AG04449 (cell line): ENCODE measurements at regions of chr3 and their contacts with region 1.

Region 1: GRCh38 chr3:47849699-47850563 is 47.0 kb downstream of the DHX30 start:
- DNase-seq: no peak
- H3K4me3 ChIP-seq: no peak overlapping the region
- CTCF ChIP-seq: peak; percentile 39

Region 2: GRCh38 chr3:47836986-47837385 is 12.9 kb before region 1 on chr3:
- CTCF ChIA-PET with region 1: interaction called, 11 read pairs
- POLR2A ChIA-PET with region 1: interaction called, 3 read pairs
- DNase-seq: no peak
- H3K4me3 ChIP-seq: no peak overlapping the region
- CTCF ChIP-seq: no peak

Region 3: DNA sequence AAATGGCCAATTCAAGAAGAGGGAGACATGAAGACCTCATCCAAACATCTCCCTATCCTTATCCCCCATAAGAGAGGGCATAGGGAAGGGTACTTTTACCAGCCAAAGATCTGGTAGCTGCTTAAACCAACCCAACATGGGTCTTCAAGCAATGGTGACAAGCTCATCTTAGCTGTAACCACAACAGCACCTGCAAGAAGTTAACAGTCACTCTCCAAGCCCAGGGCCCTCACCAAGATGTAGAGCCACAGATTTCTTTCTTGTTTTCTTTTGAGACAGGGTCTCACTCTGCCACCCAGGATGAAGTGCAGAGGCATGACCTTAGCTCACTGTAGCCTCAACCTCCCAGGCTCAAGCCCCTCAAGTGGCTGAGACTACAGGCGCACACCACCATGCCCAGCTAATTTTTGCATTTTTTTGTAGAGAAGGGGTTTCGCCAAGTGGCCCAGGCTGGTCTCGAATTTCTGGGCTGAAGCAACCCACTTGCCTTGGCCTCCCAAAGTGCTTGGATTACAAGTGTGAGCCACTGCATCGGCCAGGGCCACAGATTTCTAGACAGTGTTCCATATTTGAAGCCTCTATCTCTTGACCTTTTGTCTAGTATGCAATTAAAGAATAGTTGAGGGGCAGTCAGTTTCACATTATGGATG is 10.2 kb after region 1 on chr3:
- CTCF ChIA-PET with region 1: interaction called, 13 read pairs
- POLR2A ChIA-PET with region 1: no interaction called
- DNase-seq: no peak
- H3K4me3 ChIP-seq: no peak overlapping the region
- CTCF ChIP-seq: no peak